ENCODE measurements at regions of chr7 and their contacts with region 1.

Region 1: DNA sequence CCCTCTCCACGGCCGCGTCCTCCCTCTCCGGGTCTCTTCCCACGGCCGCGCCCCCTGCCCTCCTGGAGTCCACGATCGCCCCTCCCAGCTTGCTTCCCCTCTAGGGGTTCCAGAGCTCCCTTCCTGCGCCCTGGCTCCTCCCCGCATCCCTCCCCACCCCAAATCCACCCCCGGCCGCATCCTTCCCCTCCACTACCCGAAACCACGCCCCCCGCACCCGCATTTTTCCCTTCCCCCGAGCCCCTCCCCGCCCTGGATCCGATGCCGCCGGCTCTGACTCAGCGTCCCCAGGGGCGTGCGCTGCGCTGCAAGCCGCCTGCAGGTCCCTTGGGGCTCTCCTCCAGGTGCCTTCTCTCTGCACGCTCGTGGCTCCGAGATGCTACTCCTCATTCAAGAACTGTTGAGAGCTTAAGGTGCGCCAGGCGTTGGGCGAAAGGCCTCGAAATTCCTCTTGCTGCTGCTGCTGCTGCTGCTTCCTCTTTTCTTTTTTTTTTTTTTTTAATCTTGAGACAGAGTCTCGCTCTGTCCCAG is 372 bp upstream of the TMEM130 start:
- DNase-seq: no peak
- H3K4me3 ChIP-seq: peak overlapping the region; percentile 48
- H3K27ac ChIP-seq: no peak overlapping the region
- H3K27me3 ChIP-seq: peaks cover 23% of the 10 kb centered on the region
- CTCF ChIP-seq: peak; percentile 6

Region 2: DNA sequence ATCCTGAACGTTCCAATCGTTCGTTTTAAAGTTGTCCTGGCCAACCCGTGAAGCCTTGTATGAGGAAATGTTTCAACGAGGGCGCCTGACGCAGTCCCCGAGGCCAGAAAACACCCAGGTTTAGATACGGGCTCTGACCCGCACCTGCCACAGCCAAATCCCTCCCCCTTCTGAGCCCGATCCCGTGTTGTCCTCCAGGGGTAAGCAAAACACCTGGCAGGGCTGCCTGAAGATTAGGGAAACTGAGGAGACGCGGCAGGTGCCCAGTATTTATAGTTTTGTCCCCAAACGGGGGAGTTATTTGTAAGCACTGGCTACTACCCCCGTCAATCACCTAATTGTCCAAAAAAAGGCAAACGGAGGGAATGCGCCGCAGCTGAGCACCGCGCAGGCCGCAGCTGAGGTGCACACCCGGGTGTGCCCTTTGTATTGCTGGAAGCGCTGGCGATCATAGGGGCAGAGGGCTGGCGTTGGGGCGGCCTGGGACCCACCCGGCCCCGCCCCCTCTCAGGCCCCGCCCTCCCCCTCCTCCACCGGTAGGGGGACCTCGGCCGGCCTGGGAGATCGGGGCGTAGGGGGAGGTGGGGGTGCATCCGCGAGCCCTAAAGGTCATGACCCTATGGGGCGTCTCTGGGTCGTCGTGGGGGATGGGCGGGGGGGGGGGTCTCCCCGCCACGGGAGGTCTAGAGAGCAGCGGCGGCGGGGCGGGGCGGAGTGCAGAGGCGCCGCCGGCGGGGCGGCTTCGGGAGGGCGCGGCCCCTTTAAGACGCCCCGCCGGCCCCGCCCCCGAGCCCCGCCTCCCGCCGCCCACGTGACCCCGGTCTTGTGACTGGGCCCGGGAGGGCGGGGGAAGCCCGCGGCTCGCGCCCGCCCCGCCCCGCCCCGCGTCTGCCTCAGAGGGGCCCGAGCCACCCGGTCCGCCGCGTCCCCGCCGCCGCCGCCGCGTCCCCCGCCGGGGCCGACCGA is 589.1 kb before region 1 on chr7 and contains the start of gene BRI3:
- in situ Hi-C with region 1: loop called (anchors 25 kb)
- DNase-seq: peak; percentile 78
- H3K4me3 ChIP-seq: peak within 1 kb of the TSS; percentile 91
- H3K27ac ChIP-seq: peak within 1 kb of the TSS; percentile 85
- H3K27me3 ChIP-seq: no peaks in the 10 kb centered on the region
- CTCF ChIP-seq: peak; percentile 29

Region 3: GRCh38 chr7:99267481-99267840 is 397.3 kb after region 1 on chr7:
- in situ Hi-C with region 1: no loop called
- DNase-seq: peak; percentile 89
- H3K4me3 ChIP-seq: no peak overlapping the region
- H3K27ac ChIP-seq: peak overlapping the region; percentile 47
- H3K27me3 ChIP-seq: no peaks in the 10 kb centered on the region
- CTCF ChIP-seq: no peak